Left ventricle myocardium inferior (tissue), 1 donor: ENCODE measurements at regions of chr13 and their contacts with region 1.

Region 1: DNA sequence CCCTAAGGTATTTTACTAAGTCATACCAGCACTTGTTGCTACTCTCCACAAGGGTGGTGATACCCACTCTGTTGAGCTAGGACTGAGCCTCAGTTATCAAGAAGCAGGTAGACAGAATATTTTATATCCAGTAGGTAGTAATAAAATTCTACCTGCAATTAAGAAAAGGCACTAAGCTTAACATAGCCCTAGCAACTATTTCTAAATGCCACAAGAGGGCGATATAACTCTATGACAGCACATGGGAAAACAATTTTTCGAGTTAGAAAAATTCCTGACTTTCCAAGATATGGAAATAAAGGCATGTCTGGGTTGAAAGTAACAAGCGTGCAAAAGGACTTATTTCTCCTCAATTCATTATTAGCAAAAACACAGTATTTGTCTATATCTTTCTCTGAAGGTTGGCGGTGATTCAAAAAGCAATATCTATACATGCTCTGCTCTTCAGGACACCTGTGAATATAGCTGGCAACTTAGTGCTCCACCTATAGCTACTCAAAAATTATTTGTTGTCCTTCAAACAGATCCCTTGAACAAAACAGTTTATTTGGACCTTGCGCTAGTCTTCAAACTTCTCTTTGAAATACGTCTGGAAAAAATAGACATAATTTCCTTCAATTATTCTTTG is 14.7 kb downstream of the CCDC169 start:
- DNase-seq: no peak
- H3K4me3 ChIP-seq: no peak overlapping the region
- H3K27ac ChIP-seq: no peak overlapping the region
- H3K4me1 ChIP-seq: peaks cover 3% of the 10 kb centered on the region
- H3K27me3 ChIP-seq: no peaks in the 10 kb centered on the region
- CTCF ChIP-seq: peak; percentile 86

Region 2: DNA sequence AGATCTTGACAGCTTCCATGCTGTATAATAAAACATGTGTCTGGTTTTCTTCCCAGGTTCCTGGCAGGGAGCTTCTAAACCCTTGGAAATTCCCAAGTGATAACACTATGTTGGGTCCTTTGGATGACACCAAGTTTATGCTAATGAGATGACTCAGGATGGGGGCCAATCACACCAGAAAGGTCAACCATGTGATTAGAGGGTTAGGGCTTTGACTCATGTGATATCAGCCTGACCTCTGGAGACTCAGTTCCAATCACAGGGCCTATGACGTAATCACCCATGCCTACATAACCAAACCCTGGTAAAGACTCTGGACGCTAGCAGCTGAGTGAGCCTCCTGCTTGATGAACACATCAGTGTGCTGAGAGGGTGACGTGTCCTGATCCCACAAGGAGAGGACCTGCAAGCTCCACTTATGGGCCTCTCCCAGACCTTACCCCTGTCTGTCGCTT is 355.3 kb before region 1 on chr13:
- intact Hi-C with region 1: no loop called
- DNase-seq: no peak
- H3K4me3 ChIP-seq: no peak overlapping the region
- H3K27ac ChIP-seq: no peak overlapping the region
- H3K4me1 ChIP-seq: peaks cover 26% of the 10 kb centered on the region
- H3K27me3 ChIP-seq: no peaks in the 10 kb centered on the region
- CTCF ChIP-seq: no peak

Region 3: GRCh38 chr13:36096461-36097416 is 186.2 kb before region 1 on chr13:
- intact Hi-C with region 1: no loop called
- DNase-seq: no peak
- H3K4me3 ChIP-seq: no peak overlapping the region
- H3K27ac ChIP-seq: peak overlapping the region; percentile 10
- H3K4me1 ChIP-seq: peaks cover 9% of the 10 kb centered on the region
- H3K27me3 ChIP-seq: no peaks in the 10 kb centered on the region
- CTCF ChIP-seq: no peak

Region 4: GRCh38 chr13:36395280-36395679 is 112.3 kb after region 1 on chr13:
- intact Hi-C with region 1: loop called (anchors 10 kb)
- DNase-seq: no peak
- H3K4me3 ChIP-seq: no peak overlapping the region
- H3K27ac ChIP-seq: no peak overlapping the region
- H3K4me1 ChIP-seq: no peaks in the 10 kb centered on the region
- H3K27me3 ChIP-seq: peaks cover 5% of the 10 kb centered on the region
- CTCF ChIP-seq: peak; percentile 57

Region 5: DNA sequence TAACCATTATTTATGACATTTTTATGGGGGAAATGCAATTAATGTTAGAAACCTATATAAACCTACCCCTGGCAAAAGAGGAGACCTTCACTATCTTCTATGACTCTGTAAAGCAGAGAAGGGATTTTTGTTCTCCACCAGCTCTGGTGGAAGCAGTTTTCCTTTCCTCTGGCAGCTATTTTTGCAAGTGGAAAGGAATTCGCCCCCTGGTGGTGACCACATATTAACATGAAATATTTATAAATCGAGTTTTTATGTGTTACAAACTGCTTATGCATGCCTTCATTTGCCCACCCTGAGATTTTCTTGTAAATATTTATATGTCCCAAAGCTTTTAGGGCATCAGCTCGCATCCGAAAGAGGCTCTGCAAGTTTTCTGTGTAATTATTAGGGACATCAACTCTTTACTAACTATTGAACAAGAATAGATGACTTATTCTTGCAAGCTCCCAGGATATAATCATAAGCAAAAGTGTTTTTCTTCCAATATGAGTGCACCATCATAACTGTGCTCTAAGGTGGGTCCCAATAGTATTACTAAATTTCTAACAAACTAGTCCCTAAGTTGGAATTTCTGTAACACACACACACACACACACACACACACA is 453.3 kb after region 1 on chr13:
- intact Hi-C with region 1: loop called (anchors 10 kb)
- DNase-seq: no peak
- H3K4me3 ChIP-seq: no peak overlapping the region
- H3K27ac ChIP-seq: no peak overlapping the region
- H3K4me1 ChIP-seq: no peaks in the 10 kb centered on the region
- H3K27me3 ChIP-seq: no peaks in the 10 kb centered on the region
- CTCF ChIP-seq: peak; percentile 76